PC-9 (cell line): ENCODE measurements at regions of chr2 and their contacts with region 1.

Region 1: DNA sequence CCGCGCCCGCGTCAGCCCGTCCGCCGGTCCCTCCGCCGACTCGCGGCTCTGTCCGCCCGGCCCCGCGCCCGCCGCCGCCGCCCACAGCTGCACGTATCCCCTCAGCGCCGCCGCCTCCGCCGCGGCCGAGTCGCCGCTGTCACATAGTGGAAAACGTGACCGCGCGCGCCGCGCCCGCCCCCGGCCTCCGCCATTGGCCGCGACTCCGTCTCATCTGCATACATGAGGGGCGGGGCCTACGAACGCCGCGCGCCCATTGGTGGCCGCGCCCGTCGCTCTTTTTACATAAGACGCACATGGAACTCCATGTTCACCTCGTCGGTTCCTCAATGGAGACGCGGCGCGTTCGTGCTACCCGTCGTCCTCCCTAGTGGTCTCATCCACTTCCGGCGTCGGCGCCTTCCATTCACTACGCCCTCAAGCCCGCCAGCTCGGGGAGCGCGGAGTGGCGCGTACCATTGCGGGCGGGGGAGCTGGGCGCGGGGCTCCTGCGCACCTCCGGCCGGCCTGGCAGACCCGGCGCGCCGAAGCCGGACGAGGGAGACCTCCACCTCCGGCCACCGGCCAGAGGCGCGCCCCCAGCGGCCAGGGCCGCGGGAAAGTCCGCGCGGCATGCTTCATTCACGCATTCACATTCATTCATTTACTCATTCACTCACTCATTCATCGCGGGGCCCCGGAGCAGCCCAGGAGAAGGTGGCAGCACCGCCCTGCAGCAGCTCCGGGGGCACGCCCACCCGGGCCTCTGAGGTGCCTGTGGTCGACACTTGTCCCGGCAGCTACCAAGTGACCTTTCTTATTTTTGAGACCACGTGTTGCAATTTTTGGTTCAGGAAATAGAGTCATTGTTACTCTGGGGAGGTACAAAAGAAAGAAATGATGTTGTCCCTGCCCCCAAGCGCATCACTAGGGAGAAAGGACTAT is 502 bp upstream of the PER2 start:
- DNase-seq: peak; percentile 96 to 99
- H3K4me3 ChIP-seq: peak overlapping the region; percentile 72
- H3K27ac ChIP-seq: 0 out of 2 replicates have a peak overlapping the region, but pooled peaks have one; percentile 24
- H3K4me1 ChIP-seq: peaks cover 55% of the 10 kb centered on the region
- H3K27me3 ChIP-seq: no peaks in the 10 kb centered on the region
- CTCF ChIP-seq: peak; percentile 37; the same call in 1 of the 2 replicates

Region 2: GRCh38 chr2:238256594-238257104 is 32.3 kb before region 1 on chr2:
- CTCF ChIA-PET with region 1: no interaction called
- POLR2A ChIA-PET with region 1: no interaction called
- intact Hi-C with region 1: loop called (anchors 1 kb)
- DNase-seq: peak; percentile 84 to 96
- H3K4me3 ChIP-seq: no peak overlapping the region
- H3K27ac ChIP-seq: no peak overlapping the region
- H3K4me1 ChIP-seq: 0 out of 2 replicates have a peak, but pooled peaks cover 5% of the 10 kb centered on the region
- H3K27me3 ChIP-seq: no peaks in the 10 kb centered on the region
- CTCF ChIP-seq: peak; percentile 99

Region 3: GRCh38 chr2:238263204-238264071 is 25.5 kb before region 1 on chr2:
- CTCF ChIA-PET with region 1: interaction called, 9 read pairs
- POLR2A ChIA-PET with region 1: interaction called, 16 read pairs
- intact Hi-C with region 1: no loop called
- DNase-seq: peak; percentile 64 to 87
- H3K4me3 ChIP-seq: no peak overlapping the region
- H3K27ac ChIP-seq: no peak overlapping the region
- H3K4me1 ChIP-seq: 0 out of 2 replicates have a peak, but pooled peaks cover 5% of the 10 kb centered on the region
- H3K27me3 ChIP-seq: no peaks in the 10 kb centered on the region
- CTCF ChIP-seq: peak; percentile 94

Region 4: DNA sequence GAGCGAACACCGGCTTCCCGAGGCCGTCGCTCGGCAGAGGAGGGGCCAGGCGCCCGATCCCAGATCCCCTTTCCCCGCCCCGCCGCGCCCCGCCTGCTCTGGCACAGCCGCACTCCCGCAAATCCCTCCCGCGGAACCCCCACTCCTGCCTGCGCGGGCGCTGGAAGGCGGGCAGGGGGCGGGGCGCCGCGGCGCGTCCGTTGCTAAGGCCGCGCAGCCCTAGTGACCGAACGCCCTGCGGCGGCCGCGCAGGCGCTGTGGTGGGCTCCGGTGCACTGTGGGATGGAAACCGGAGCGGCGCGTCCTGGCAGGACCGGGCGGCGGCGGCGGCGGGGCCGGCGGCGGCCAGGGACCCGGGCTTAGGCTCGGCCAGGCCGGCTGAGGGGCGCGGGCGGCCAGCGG is 31.3 kb after region 1 on chr2 and contains the start of gene TRAF3IP1:
- CTCF ChIA-PET with region 1: no interaction called
- POLR2A ChIA-PET with region 1: interaction called, 7 read pairs
- intact Hi-C with region 1: loop called (anchors 1 kb)
- DNase-seq: peak; percentile 86 to 100
- H3K4me3 ChIP-seq: peak within 1 kb of the TSS; percentile 61
- H3K27ac ChIP-seq: no peak within 1 kb of the TSS
- H3K4me1 ChIP-seq: peaks cover 19% of the 10 kb centered on the region
- H3K27me3 ChIP-seq: no peaks in the 10 kb centered on the region
- CTCF ChIP-seq: no peak
- total RNA-seq, gene TRAF3IP1: 50.2 and 51.7 TPM in 2 replicates

Region 5: DNA sequence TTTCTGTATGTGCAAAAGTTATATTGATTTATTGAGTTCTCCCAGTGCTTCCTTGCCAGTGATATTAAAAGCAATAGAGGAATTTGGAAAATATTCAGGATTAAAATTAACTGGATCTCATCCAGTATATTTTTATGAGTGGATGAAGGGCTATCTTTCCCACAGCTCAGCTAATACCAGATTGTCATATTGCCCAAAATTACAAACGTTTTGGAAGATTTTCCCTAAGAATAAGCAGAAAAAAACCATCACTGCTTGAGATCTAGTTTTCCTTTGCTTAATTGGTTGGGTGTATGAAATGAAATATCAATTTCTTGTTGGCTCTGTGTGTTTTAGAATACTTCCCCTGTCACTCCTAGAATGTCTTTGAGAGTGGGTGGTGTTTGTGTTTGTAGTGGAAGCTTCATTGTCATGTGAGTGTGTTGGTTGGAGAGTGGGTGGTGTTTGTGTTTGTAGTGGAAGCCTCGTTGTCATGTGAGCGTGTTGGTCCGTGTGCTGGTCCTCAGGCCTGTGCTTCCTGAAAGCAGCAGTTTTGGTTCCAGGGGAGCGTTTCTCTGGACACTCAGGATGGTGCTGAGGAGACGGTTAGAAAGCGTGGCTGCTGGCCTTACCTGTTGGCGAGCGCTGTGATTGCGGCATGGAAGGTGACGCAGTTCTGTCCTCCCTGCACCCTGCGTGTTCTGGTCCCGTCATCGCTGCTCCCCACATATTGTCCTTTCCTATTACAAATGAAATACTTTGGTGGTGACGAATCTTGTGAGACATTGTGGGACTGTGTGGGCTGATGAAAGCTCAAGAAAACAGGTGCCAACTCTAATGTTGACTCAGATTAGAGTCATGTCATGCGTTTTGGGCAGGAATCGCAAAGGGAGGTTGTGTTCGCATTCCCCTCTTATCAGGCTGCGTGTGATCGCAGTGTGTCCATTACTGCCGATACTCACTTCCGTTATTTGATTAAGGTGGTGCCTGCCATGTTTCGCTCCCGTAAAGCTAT is 150.2 kb after region 1 on chr2:
- CTCF ChIA-PET with region 1: interaction called, 7 read pairs
- POLR2A ChIA-PET with region 1: interaction called, 4 read pairs
- intact Hi-C with region 1: loop called (anchors 5 kb)
- DNase-seq: peak; percentile 86 to 89
- H3K4me3 ChIP-seq: no peak overlapping the region
- H3K27ac ChIP-seq: peak overlapping the region; percentile 81
- H3K4me1 ChIP-seq: peaks cover 13% of the 10 kb centered on the region
- H3K27me3 ChIP-seq: no peaks in the 10 kb centered on the region
- CTCF ChIP-seq: no peak

Region 6: GRCh38 chr2:239275044-239275685 is 986.3 kb after region 1 on chr2:
- CTCF ChIA-PET with region 1: no interaction called
- POLR2A ChIA-PET with region 1: interaction called, 6 read pairs
- intact Hi-C with region 1: loop called (anchors 5 kb)
- DNase-seq: peak; percentile 87 to 97
- H3K4me3 ChIP-seq: peak overlapping the region; percentile 59
- H3K27ac ChIP-seq: peak overlapping the region; percentile 82
- H3K4me1 ChIP-seq: peaks cover 47% of the 10 kb centered on the region
- H3K27me3 ChIP-seq: no peaks in the 10 kb centered on the region
- CTCF ChIP-seq: no peak